ENCODE measurements at regions of chr5 and their contacts with region 1.

Region 1: DNA sequence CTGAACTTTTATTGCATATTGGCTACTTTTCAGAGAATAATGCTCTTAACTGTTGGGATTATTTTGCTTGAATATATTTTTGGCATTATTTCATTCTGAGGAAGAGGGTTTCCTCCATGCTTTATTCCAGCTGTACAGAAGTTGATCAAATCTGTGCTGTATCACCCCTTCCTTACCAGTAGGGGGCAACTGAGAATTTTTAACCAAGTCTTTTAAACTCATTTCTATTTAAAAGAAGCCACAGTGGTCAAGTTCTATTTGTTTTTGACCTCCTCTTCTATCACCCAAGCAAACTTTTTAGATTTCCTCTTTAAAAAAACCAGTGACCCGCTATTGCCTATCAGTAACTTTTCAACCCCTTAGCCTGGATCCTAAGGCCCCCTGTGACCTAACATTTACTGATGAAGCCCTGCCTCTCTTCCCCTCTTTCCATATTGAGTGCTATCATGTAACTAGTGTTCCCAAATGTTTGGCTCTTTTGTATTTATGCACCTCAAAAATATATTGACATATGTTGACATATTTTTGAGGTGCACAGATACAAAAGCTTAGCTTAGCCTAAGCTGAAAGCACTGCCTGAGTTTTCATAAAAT is 80.6 kb downstream of the FBXO4 start:
- DNase-seq: no peak
- H3K4me3 ChIP-seq: no peak overlapping the region
- H3K27ac ChIP-seq: no peak overlapping the region
- H3K4me1 ChIP-seq: no peaks in the 10 kb centered on the region
- H3K27me3 ChIP-seq: no peaks in the 10 kb centered on the region
- CTCF ChIP-seq: peak; percentile 29 to 68 (median 63)
- POLR2A ChIP-seq: no peak

Region 2: DNA sequence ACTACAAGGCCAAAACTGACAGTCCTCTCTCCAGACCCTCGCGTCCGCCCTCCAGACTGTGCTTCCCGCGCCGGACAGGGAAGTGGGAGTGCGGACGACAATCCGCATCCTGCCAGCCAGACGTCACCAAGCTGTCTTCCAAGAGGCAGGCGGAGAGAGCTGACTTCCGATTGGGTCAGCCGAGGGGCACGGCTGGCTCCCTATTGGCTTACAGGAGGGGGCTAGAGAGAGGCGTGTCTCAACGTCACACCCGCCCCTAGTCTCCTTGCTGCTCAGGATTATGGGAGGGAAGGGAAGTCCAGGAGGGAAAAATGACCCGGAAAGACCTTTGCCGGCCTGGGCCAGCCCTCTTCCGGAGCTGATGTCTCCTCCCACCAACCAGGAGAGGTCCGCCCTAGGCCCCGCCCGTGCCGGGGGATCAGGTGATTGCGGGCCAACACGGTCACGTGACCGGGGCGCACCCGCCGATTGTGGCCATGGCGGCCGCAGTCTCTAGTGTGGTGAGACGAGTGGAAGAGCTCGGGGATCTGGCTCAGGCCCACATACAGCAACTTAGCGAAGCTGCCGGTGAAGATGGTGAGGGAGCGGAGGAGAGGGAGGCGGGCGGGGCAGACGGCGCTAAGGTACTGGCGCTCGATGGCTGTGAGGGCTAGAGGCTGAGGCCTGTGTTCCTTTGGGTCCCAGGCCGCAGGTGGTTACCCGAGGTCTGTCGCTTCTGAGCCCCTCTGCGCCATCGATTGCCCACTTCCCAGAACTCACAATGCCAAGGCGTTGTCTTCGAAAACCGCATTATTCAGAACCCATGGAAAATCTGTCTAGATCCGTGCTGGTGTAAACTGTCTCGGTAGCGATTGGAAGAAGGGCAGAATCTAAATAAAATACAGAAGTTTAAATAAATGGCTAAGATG is 101.5 kb before region 1 on chr5 and contains the start of gene RIMOC1:
- intact Hi-C with region 1: no loop called
- DNase-seq: peak; percentile 99
- H3K4me3 ChIP-seq: peak within 1 kb of the TSS; percentile 57 to 74
- H3K27ac ChIP-seq: peak within 1 kb of the TSS; percentile 90
- H3K4me1 ChIP-seq: peaks cover 2% of the 10 kb centered on the region
- H3K27me3 ChIP-seq: no peaks in the 10 kb centered on the region
- CTCF ChIP-seq: peak in 1 of 4 experiments; percentile 12
- POLR2A ChIP-seq: peak; percentile 71
- total RNA-seq, gene RIMOC1: 18.1 to 20.5 TPM

Region 3: DNA sequence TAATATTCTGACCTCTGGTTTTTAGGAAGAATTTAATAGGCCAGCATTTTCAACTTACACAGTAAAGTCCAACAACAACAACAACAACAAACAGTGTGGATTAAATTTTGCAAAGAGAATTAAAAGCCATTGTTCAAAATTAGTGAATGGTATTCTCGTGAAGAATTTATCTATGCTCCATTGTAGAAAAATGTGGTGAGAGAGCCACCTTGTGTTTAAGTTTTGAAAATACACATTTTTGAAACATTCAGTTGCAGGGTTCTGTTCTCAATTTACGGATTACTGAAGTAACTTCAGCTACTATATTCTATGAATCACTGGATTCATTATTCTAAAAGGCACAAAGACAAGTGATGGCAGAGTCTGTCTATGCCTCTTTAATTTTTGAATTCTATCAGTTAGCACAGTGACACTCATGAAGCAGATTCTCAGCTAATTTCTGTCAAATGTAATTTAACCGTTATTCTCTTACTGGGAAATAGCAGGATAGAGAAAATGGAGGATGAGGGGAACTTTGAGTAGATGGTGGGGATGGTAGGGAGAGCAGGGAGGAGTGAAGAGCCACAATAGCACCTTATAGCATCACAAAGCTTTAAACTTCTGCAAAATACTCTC is 761.9 kb after region 1 on chr5:
- intact Hi-C with region 1: loop called (anchors 10 kb)
- DNase-seq: no peak
- H3K4me3 ChIP-seq: no peak overlapping the region
- H3K27ac ChIP-seq: no peak overlapping the region
- H3K4me1 ChIP-seq: no peaks in the 10 kb centered on the region
- H3K27me3 ChIP-seq: no peaks in the 10 kb centered on the region
- CTCF ChIP-seq: peak; percentile 13 to 69 (median 53)
- POLR2A ChIP-seq: no peak